BJ (cell line): ENCODE measurements at regions of chr11 and their contacts with region 1.

Region 1: DNA sequence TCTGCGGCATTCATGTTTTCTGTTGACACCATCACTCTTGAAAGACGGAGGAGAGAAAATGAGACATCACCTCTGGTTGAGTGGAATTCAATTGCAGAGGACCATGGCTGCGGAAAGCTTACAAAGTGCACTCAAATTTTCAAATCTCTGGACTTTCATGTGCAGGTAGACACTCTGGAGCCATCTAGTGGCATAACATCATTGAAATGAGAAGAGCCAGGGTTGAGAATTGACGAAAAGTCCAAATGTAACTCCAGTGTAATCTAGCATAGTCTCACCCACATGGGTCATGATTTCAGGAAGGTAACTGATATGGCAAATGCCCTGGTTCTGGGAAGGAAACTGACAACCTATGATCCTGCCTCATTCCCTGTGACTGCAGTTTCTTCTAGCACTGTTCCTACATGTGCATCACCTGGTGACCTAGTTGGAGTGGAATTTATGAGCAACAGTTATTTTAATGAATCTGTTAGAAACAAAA is 687.8 kb downstream of the KCNA4 start:
- DNase-seq: no peak
- H3K4me3 ChIP-seq: no peak overlapping the region
- H3K27me3 ChIP-seq: no peaks in the 10 kb centered on the region
- CTCF ChIP-seq: peak; percentile 71

Region 2: GRCh38 chr11:29159552-29160465 is 169.2 kb before region 1 on chr11:
- CTCF ChIA-PET with region 1: interaction called, 17 read pairs
- POLR2A ChIA-PET with region 1: no interaction called
- DNase-seq: no peak
- H3K4me3 ChIP-seq: no peak overlapping the region
- H3K27me3 ChIP-seq: no peaks in the 10 kb centered on the region
- CTCF ChIP-seq: peak; percentile 75

Region 3: DNA sequence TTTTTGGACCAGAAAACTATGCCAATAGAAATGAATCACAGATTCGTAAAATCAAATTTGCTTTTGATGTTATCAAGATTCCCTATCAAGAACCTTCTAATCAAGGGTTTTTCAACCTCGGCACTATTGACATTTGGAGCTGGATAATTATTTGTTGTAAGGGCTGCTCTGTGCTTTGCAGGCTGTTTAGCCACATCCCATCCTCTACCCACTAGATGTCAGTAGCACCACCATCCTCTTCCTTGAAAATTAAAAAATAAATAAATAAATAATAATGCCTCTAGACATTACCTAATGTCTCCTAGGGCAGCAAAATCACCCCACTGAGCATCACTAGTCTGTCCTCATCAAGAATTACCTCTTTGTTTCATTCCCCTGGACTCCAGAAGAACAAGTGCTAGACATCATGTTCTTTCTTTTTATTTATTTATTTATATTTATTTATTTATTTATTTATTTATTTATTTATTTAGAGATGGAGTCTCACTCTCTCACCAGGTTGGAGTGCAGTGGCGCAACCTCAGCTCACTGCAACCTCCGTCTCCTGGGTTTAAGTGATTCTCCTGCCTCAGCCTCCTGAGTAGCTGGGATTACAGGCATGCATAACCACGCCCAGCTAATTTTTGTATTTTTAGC is 56.9 kb before region 1 on chr11:
- CTCF ChIA-PET with region 1: interaction called, 10 read pairs
- POLR2A ChIA-PET with region 1: no interaction called
- DNase-seq: no peak
- H3K4me3 ChIP-seq: no peak overlapping the region
- H3K27me3 ChIP-seq: no peaks in the 10 kb centered on the region
- CTCF ChIP-seq: peak; percentile 58

Region 4: GRCh38 chr11:29352273-29352795 is 23.3 kb after region 1 on chr11:
- CTCF ChIA-PET with region 1: no interaction called
- POLR2A ChIA-PET with region 1: no interaction called
- DNase-seq: no peak
- H3K4me3 ChIP-seq: no peak overlapping the region
- H3K27me3 ChIP-seq: peaks cover 13% of the 10 kb centered on the region
- CTCF ChIP-seq: no peak